Natural killer cell (primary cell): ENCODE measurements at regions of chr6 and their contacts with region 1.

Region 1: DNA sequence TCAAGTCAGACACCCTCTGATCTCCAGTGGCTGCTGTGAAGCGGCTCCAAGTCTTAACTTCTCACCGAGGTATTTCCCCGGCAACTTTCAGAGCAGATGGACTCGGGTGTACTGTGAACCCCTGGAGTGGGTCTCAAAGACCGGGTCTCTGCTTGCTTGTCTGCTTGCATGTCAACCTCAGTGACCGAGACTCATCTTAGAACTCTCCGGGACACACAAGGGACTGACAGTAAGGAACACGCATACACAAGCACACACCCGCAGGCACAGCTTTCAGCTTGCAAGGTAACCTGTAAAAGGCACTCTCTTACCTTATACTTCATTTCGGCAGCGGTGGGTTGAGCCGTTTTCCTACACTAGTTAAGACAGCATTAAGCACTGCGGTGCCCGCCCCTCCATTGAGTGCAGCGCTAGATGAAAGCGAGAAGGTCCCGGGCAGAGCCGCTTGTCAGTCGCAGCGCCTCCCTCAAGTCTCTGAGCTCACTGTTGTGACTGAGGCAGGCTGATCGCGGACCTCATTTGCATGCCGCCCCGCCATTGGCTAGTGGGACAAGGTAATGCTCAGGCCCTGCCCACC is at the start of gene NEDD9:
- DNase-seq: peak; percentile 93 to 97
- ATAC-seq: peak; percentile 90 to 98 (median 94)
- H3K4me3 ChIP-seq: peak within 1 kb of the TSS; percentile 59
- H3K4me3 Mint-ChIP-seq: peak within 1 kb of the TSS; percentile 94
- H3K27ac ChIP-seq: peak within 1 kb of the TSS; percentile 95
- H3K27ac Mint-ChIP-seq: peak within 1 kb of the TSS; percentile 96 to 98
- H3K4me1 ChIP-seq: peaks cover 40% of the 10 kb centered on the region
- H3K4me1 Mint-ChIP-seq: peaks cover 82 to 88% of the 10 kb centered on the region in 2 donors
- H3K27me3 ChIP-seq: no peaks in the 10 kb centered on the region
- H3K27me3 Mint-ChIP-seq: no peaks in the 10 kb centered on the region
- CTCF ChIP-seq: no peak
- total RNA-seq, gene NEDD9: 106 to 110 (median 107) TPM

Region 2: DNA sequence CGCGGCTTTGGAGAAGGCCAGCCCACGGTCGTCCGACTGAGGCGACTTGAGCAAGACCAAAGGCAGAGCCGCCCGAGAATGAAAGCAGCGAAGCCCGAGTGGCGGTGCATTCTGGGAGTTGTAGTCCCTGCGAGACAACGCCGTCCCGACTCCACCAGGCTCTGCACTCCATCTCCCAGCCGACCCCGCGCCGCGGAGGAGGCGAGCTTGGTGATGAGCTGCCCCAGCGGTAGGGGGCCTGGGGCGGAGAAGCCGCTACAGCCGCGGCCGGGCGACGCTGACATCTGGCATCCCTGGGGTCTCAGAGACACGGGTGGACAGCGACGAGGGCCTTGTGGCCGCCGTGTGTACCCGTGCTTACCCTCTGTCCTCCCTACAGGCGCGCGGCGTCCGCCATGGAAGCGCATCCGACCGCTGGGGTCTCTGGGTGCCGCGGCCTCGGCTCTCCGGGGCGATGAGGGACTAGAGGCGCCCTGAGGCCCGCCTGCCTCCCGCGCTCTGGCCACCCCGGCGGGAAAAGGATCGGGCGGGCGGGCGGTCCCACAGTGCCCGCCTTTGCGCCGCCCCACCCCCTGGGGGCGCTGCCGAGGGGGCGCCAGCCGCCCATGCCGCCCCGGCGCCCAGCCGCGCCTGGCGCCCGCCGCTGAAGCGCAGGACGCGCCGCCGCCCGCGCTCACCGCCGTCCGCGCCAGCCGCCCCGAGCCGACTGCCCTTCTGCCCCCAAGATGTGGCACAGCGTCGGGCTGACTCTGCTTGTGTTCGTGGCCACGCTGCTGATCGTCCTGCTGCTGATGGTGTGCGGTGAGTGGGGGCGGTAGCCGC is 138.5 kb before region 1 on chr6 and contains the start of gene SMIM13:
- intact Hi-C with region 1: loop called (anchors 5 kb)
- DNase-seq: peak; percentile 92 to 96
- ATAC-seq: peak; percentile 91 to 97 (median 91)
- H3K4me3 ChIP-seq: peak within 1 kb of the TSS; percentile 98
- H3K4me3 Mint-ChIP-seq: peak within 1 kb of the TSS; percentile 99
- H3K27ac ChIP-seq: peak within 1 kb of the TSS; percentile 99
- H3K27ac Mint-ChIP-seq: peak within 1 kb of the TSS; percentile 94 to 96
- H3K4me1 ChIP-seq: peaks cover 17% of the 10 kb centered on the region
- H3K4me1 Mint-ChIP-seq: peaks cover 22 to 29% of the 10 kb centered on the region in 2 donors
- H3K27me3 ChIP-seq: no peaks in the 10 kb centered on the region
- H3K27me3 Mint-ChIP-seq: peaks cover 0 to 4% of the 10 kb centered on the region in 2 donors
- CTCF ChIP-seq: peak; percentile 75
- total RNA-seq, gene SMIM13: 5.3 to 10.3 (median 9.8) TPM

Region 3: DNA sequence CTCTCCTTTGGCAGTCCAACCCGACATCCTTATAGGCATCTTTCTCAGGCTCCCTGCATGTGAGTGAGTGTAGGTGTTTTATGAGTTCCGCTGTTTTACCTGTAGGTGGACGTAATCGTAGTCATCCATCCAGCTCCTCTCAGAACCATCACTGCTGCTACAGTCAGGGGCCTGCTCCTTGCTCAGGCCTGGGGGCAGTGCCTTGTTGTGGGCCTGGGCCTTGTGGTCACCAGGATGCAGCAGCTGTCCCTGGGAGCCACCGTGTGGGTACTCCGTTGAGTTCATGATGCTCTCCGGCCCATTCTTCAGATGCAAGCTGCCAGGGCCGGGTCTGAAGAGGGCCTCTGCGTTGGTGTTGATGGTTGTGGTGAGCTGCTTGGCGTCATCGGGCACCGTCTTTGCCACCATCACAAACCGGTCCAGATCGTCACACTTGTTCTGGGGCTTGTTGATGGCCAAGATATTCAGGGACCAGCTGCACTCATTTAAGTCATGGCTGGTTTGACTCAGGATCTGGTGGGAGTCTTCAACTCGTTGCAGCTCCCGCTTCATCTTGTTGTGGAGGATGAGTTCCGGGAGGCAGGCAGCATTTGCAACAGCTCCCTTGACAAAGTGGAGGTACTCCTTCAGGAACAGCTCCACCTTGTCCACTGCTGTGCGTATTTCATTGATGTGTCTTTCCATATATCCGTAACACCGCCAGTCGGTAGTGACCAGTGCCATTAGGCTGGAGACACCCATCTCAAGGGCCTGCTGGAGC is 42.2 kb before region 1 on chr6:
- intact Hi-C with region 1: no loop called
- DNase-seq: no peak
- ATAC-seq: no peak
- H3K4me3 ChIP-seq: no peak overlapping the region
- H3K4me3 Mint-ChIP-seq: no peak overlapping the region
- H3K27ac ChIP-seq: no peak overlapping the region
- H3K27ac Mint-ChIP-seq: peak overlapping the region; percentile 18 to 36
- H3K4me1 ChIP-seq: no peaks in the 10 kb centered on the region
- H3K4me1 Mint-ChIP-seq: peaks cover 24 to 26% of the 10 kb centered on the region in 2 donors
- H3K27me3 ChIP-seq: no peaks in the 10 kb centered on the region
- H3K27me3 Mint-ChIP-seq: no peaks in the 10 kb centered on the region
- CTCF ChIP-seq: no peak

Region 4: GRCh38 chr6:11202513-11203305 is 29.6 kb before region 1 on chr6:
- intact Hi-C with region 1: loop called (anchors 1 kb)
- DNase-seq: peak; percentile 37 to 69
- ATAC-seq: peak; percentile 81 to 88 (median 84)
- H3K4me3 ChIP-seq: no peak overlapping the region
- H3K4me3 Mint-ChIP-seq: peak overlapping the region; percentile 90
- H3K27ac ChIP-seq: peak overlapping the region; percentile 84
- H3K27ac Mint-ChIP-seq: peak overlapping the region; percentile 98 to 99
- H3K4me1 ChIP-seq: peaks cover 50% of the 10 kb centered on the region
- H3K4me1 Mint-ChIP-seq: peaks cover 83% of the 10 kb centered on the region in 2 donors
- H3K27me3 ChIP-seq: no peaks in the 10 kb centered on the region
- H3K27me3 Mint-ChIP-seq: no peaks in the 10 kb centered on the region
- CTCF ChIP-seq: no peak

Region 5: GRCh38 chr6:11218538-11219399 is 13.5 kb before region 1 on chr6:
- intact Hi-C with region 1: no loop called
- DNase-seq: no peak
- ATAC-seq: no peak
- H3K4me3 ChIP-seq: no peak overlapping the region
- H3K4me3 Mint-ChIP-seq: peak overlapping the region; percentile 5
- H3K27ac ChIP-seq: no peak overlapping the region
- H3K27ac Mint-ChIP-seq: peak overlapping the region; percentile 57 to 98
- H3K4me1 ChIP-seq: peaks cover 47% of the 10 kb centered on the region
- H3K4me1 Mint-ChIP-seq: peaks cover 97 to 98% of the 10 kb centered on the region in 2 donors
- H3K27me3 ChIP-seq: no peaks in the 10 kb centered on the region
- H3K27me3 Mint-ChIP-seq: no peaks in the 10 kb centered on the region
- CTCF ChIP-seq: no peak

Region 6: DNA sequence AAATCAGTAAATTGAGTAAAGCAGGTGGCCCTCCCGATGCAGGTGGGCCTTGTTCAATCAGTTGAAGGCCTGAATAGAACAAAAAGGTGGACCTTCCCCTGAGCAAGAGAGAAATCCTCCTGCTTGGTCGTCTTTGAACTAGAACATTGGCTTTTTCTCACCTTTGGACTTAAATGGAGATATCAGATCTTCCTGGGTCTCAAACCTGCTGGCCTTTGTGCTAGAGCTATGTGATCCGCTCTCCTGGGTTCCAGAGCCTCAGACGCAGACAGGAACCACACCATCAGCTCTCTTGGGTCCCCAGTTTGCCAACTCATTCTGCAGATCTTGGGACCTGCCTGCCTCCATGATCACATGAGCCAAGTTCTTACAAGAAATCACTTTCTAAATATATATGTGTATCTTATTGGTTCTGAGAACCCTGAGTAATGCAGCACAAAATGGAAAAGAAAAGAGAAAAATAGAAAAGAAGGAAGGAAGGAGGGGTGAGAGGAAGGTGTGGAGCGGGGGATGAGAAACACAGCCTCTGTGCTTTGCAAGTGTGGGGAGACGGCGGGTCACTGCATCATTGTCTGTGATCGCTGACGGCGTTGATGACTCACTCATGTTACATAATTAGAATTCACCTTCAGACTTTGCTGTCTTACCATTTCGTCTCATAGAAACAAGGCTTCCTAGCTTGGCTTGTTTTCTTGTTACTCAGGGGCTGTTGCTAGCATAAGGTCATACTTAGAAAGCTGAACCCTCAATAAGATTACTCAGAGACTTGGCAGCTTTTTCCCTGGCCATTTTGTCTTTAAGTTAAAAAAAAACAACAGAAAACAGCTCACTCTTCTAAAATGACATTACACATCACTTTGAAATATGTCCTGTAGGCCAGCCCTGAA is 85.8 kb after region 1 on chr6:
- intact Hi-C with region 1: loop called (anchors 5 kb)
- DNase-seq: peak; percentile 35 to 83
- ATAC-seq: peak; percentile 87 to 89 (median 88)
- H3K4me3 ChIP-seq: no peak overlapping the region
- H3K4me3 Mint-ChIP-seq: no peak overlapping the region
- H3K27ac ChIP-seq: peak overlapping the region; percentile 30
- H3K27ac Mint-ChIP-seq: peak overlapping the region; percentile 27 to 85
- H3K4me1 ChIP-seq: peaks cover 19% of the 10 kb centered on the region
- H3K4me1 Mint-ChIP-seq: peaks cover 53 to 59% of the 10 kb centered on the region in 2 donors
- H3K27me3 ChIP-seq: no peaks in the 10 kb centered on the region
- H3K27me3 Mint-ChIP-seq: no peaks in the 10 kb centered on the region
- CTCF ChIP-seq: no peak

Region 7: DNA sequence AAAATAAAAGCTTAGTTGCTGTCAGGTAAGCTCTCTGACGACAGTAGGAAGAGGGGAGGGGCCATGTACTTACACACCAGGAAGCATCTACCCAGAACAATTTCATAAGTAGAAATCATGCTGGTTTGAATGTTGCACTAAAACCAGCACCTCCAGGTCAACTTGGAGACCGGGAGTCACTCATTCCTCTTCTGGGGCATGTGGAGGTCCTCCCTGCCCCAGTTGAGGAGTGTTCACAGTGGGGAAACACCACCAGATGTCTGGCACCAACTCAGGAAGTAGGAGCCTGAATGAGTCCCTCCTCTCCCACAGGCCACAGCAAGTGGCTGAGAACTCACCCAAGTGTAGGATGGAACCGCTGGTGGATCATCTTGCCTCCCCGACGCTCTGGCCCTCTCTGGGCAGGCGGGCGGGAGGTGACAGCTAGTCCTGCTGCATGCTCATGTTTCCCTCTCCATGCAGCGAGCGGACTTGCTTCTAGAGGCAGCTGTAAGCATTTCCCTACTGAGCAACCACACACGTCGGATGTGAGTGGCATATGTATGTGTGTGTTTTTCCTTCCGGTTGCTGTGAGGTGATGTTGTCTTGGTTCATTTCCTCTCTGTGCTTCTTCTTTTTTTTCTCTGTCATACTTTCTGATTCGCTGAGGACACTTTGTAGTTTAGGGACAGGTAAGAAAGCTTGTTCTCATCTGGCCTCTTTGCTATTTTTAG is 149.7 kb after region 1 on chr6:
- intact Hi-C with region 1: loop called (anchors 1 kb)
- DNase-seq: peak; percentile 66 to 90
- ATAC-seq: peak; percentile 89 to 96 (median 93)
- H3K4me3 ChIP-seq: peak overlapping the region; percentile 77
- H3K4me3 Mint-ChIP-seq: peak overlapping the region; percentile 97
- H3K27ac ChIP-seq: peak overlapping the region; percentile 90
- H3K27ac Mint-ChIP-seq: peak overlapping the region; percentile 95 to 97
- H3K4me1 ChIP-seq: peaks cover 43% of the 10 kb centered on the region
- H3K4me1 Mint-ChIP-seq: peaks cover 52 to 59% of the 10 kb centered on the region in 2 donors
- H3K27me3 ChIP-seq: no peaks in the 10 kb centered on the region
- H3K27me3 Mint-ChIP-seq: peaks cover 0 to 8% of the 10 kb centered on the region in 2 donors
- CTCF ChIP-seq: no peak